K562 (cell line): ENCODE measurements at regions of chr5 and their contacts with region 1.

Region 1: GRCh38 chr5:10761166-10761932 is at the start of gene DAP:
- DNase-seq: peak; percentile 94 to 95 (median 94)
- ATAC-seq: peak; percentile 75
- H3K4me3 ChIP-seq: peak within 1 kb of the TSS; percentile 88
- H3K27ac ChIP-seq: peak within 1 kb of the TSS; percentile 95
- H3K4me1 ChIP-seq: peaks cover 18 to 36% of the 10 kb centered on the region in 2 experiments
- H3K27me3 ChIP-seq: no peaks in the 10 kb centered on the region
- CTCF ChIP-seq: no peak
- EP300 ChIP-seq: no peak
- POLR2A ChIP-seq: peak; percentile 75
- RAD21 ChIP-seq: 0 out of 4 replicates have a peak, but pooled peaks of 1 of the 2 experiments have one; percentile 7
- polyA plus RNA-seq, gene DAP: 14.1 to 21.7 TPM

Region 2: DNA sequence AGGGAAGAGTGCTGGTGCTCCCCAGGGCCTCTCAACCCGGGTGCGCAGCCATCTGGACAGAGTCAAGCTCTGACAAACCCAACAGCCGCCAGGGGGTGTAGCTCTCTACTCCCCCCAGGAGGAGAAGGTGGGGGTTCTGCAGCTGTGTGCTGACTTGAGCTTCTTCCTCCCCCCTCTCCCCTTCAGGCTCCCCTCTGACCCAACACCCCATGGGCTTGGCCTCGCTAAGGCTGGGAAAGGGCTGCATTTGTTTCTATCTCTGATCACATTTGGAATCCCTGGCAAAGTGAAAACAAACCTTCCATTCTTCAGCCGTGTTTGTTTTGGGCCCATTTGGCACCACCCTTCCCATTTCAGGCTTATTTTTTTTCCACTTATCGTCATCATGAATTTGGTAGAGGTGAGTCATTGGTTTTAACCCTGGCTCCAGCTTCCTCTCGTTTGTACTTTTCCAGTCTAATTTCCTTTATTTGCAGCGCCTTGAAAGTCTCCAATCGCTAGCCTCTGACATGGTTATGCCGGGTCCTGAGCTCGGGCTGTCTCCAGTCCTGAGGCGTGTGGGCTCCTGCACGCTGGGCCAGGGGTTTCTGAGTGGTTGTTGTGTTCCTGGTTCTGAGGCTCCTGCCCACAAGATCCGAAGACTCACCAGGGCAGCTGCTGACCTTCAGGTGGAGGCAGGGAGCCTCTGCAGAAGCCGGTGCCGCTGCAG is 36.4 kb before region 1 on chr5:
- CTCF ChIA-PET with region 1: no interaction called
- POLR2A ChIA-PET with region 1: interaction called, 5 read pairs
- in situ Hi-C with region 1: no loop called
- intact Hi-C with region 1: loop called (anchors 2 kb)
- DNase-seq: peak; percentile 86 to 92 (median 88)
- ATAC-seq: peak; percentile 95
- H3K4me3 ChIP-seq: no peak overlapping the region
- H3K27ac ChIP-seq: peak overlapping the region; percentile 82
- H3K4me1 ChIP-seq: peaks cover 24 to 53% of the 10 kb centered on the region in 2 experiments
- H3K27me3 ChIP-seq: no peaks in the 10 kb centered on the region
- CTCF ChIP-seq: peak; percentile 87 to 96 (median 89)
- EP300 ChIP-seq: no peak
- POLR2A ChIP-seq: peak; percentile 26; the same call in 1 of the 2 replicates
- RAD21 ChIP-seq: peak; percentile 52 to 84; a peak in 3 of 4 replicates

Region 3: DNA sequence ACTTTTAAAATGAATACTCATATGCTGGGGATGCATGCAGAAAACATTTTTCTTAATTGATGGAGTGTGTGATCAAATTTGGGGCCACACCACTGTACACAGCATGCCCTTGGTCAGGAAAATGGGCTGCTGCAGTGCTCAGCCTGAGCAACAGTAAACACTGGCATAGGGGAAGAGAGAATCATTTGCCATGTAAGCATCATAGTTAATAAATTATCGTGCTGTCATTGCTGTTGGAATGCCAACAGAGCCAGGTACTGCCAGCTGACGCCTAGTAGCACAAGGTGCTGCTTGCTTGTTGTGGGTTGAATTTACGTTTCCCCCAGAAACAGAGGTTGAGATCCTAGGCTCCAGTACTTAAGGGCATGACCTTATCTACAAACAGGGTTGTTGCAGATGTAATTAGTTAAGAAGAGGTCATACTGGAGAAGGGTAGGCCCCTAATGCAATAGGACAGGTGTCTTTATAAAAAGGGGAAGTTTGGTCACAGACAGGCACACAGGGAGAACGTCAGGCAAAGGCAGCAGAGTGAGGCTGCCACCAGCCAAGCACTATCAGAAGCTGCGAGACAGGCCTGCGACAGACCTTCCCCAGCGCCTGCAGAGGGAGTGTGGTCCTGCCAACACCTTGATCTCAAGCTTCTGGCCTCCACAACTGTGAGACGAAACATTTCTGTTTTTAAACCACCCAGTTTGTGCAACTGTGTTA is 25.6 kb before region 1 on chr5:
- CTCF ChIA-PET with region 1: no interaction called
- POLR2A ChIA-PET with region 1: interaction called, 10 read pairs
- in situ Hi-C with region 1: no loop called
- intact Hi-C with region 1: loop called (anchors 2 kb)
- DNase-seq: peak in 2 of 4 experiments; percentile 35 to 70
- ATAC-seq: peak; percentile 68
- H3K4me3 ChIP-seq: no peak overlapping the region
- H3K27ac ChIP-seq: peak overlapping the region; percentile 25; the same call in 2 of the 3 replicates
- H3K4me1 ChIP-seq: peaks cover 23 to 54% of the 10 kb centered on the region in 2 experiments
- H3K27me3 ChIP-seq: no peaks in the 10 kb centered on the region
- CTCF ChIP-seq: peak; percentile 17 to 46 (median 32); a peak in 3 of 6 replicates
- EP300 ChIP-seq: peak; percentile 16; the same call in 1 of the 2 replicates
- POLR2A ChIP-seq: no peak
- RAD21 ChIP-seq: peak; percentile 25 to 27; a peak in 1 of 4 replicates

Region 4: GRCh38 chr5:10746711-10747110 is 14.6 kb before region 1 on chr5:
- CTCF ChIA-PET with region 1: no interaction called
- POLR2A ChIA-PET with region 1: interaction called, 10 read pairs
- in situ Hi-C with region 1: no loop called
- intact Hi-C with region 1: no loop called
- DNase-seq: no peak
- ATAC-seq: no peak
- H3K4me3 ChIP-seq: no peak overlapping the region
- H3K27ac ChIP-seq: no peak overlapping the region
- H3K4me1 ChIP-seq: no peaks in the 10 kb centered on the region; a peak in 1 of 5 replicates
- H3K27me3 ChIP-seq: no peaks in the 10 kb centered on the region
- CTCF ChIP-seq: no peak
- EP300 ChIP-seq: no peak
- POLR2A ChIP-seq: no peak
- RAD21 ChIP-seq: no peak